Right ventricle myocardium inferior (tissue), 1 donor: ENCODE measurements at regions of chr9 and their contacts with region 1.

Region 1: DNA sequence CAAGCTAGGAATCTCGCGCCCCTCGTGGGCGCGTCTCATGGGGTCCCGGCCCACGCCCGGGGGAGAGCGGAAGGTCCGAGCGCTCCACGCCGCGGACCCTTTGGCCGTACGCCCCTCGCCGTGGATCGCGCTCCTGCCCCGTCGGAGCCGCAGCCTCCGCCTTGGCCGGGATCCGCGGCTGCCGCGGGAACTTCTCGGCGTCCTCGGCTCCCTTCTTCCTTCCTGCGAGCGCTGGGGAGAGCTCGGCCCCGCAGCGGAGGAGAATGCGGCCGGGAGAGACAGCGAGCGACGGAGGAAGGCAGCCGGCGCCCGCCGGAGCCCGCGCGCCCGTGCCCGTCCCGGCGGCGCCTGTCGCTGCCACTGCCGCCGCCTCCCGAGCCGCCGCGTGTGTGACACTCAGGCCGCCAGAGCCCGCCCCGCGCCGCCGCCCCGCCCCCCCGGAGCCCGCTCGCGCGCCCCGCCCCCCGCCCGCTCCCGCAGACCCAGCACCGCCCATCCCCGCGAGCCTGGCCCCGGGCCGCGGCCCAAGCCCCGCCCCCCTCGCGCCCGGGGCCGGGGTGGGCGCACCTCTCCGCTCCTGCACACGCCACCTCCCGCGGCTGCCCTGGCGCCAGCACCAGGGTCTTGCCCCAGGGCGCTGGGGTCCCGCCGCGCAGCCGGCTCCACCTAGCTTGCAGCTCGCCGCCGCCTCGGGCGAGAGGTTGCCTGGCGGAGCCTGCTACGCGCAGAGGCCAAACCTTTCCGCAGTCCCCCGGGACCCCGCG is at the start of gene SHB:
- DNase-seq: peak; percentile 92
- ATAC-seq: peak; percentile 90
- total RNA-seq, gene SHB: 14.7 TPM

Region 2: DNA sequence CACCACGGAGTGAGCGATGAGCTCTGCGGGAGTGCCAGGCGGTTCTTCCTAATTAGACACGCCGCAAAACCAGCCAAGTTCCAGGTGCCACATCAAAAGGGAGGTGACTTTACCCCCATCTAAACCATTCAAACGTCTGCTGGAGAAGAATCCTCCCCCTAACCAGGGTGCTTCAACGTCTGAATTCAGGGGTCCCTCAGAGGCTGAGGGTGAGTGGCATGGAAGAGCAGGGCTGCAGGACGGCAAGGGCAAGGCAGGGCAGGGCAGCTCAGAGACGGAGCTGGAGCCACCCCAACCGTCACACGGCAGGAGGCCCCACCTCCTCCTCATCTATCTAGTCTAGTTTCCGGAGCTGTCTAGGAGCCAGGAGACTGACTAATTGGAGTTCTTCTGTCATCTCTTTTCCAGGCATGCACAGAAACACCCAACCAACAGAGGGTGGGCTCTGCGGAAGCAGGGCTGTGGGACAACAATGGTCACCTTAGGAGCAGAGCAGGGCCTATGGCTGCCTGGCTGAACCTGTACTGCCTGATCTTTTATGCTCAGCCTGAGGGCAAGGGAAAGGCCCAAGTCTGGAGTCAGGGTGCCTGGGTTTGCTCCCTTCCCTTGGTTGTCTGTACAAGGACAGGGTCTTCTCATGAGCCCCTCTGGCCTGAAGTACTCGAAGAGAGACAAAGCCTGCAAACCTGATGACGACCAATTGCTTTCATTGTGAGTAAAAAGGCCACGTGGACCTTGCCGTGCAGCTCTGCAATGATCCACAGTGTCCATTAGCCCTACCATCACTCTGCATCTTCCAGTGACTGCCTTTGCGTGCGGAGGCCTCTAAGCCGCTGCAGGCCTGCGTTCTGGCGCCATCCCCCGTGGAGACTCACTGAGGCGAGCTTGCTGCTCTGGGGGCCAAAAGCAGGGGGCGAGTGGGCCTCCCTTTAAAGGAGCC is 84.1 kb before region 1 on chr9:
- intact Hi-C with region 1: loop called (anchors 5 kb)
- DNase-seq: no peak
- ATAC-seq: peak; percentile 68

Region 3: GRCh38 chr9:38017149-38017884 is 51.7 kb before region 1 on chr9:
- intact Hi-C with region 1: loop called (anchors 2 kb)
- DNase-seq: no peak
- ATAC-seq: peak; percentile 72

Region 4: GRCh38 chr9:38047301-38048251 is 21.5 kb before region 1 on chr9:
- intact Hi-C with region 1: loop called (anchors 2 kb)
- DNase-seq: peak; percentile 82
- ATAC-seq: peak; percentile 88